ENCODE measurements at regions of chr21 and their contacts with region 1.

Region 1: GRCh38 chr21:45439161-45439872 is 34.4 kb downstream of the COL18A1 start:
- DNase-seq: peak; percentile 93
- H3K4me3 ChIP-seq: peak overlapping the region; percentile 11 to 45 (median 36)
- H3K27ac ChIP-seq: peak overlapping the region; percentile 66 to 80 (median 77)
- H3K4me1 ChIP-seq: peaks cover 0 to 24% (median 14%) of the 10 kb centered on the region in 4 donors
- H3K27me3 ChIP-seq: no peaks in the 10 kb centered on the region
- CTCF ChIP-seq: peak; percentile 96 to 98 (median 98)
- EP300 ChIP-seq: peak in 1 of 4 donors; percentile 52
- POLR2A ChIP-seq: no peak

Region 2: GRCh38 chr21:44949779-44950198 is 489.5 kb before region 1 on chr21:
- intact Hi-C with region 1: loop called (anchors 10 kb)
- DNase-seq: peak; percentile 94
- H3K4me3 ChIP-seq: no peak overlapping the region
- H3K27ac ChIP-seq: peak overlapping the region; percentile 16 to 63 (median 35)
- H3K4me1 ChIP-seq: peaks cover 0 to 35% (median 27%) of the 10 kb centered on the region in 4 donors
- H3K27me3 ChIP-seq: no peaks in the 10 kb centered on the region
- CTCF ChIP-seq: peak; percentile 94 to 98 (median 96)
- EP300 ChIP-seq: no peak
- POLR2A ChIP-seq: no peak

Region 3: DNA sequence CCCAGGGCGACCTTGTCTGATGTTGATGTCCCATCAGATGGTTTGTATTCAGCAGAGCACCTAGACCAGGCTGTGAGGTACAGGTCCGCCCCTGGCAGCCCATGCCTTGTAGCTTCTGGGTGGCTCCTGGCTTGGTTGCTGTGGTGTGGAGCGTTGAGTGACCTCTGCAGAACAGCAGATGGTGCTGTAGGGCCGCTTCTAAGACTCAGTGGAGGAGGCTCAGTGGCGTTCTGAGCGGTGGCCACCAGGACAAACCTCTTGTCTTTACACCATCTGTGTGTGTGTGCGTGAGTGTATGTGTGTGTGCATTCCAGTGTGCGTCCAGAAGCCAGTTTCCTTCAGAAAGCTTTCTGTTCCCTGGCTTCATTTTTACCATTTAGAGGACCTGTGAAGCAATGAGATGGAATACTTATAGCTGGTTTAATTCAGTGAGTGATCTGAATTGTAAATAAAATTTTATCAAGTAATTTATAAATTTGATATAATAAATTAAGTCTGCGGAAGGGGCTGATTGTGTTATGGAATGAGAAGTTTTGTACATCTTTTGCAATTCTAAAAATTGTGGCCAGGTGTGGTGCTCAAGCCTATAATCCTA is 298.9 kb before region 1 on chr21:
- intact Hi-C with region 1: loop called (anchors 5 kb)
- DNase-seq: peak; percentile 87
- H3K4me3 ChIP-seq: no peak overlapping the region
- H3K27ac ChIP-seq: peak overlapping the region in 2 of 4 donors; percentile 24 to 47
- H3K4me1 ChIP-seq: peaks cover 4 to 48% (median 26%) of the 10 kb centered on the region in 4 donors
- H3K27me3 ChIP-seq: no peaks in the 10 kb centered on the region
- CTCF ChIP-seq: peak; percentile 68 to 83 (median 76)
- EP300 ChIP-seq: no peak
- POLR2A ChIP-seq: no peak

Region 4: GRCh38 chr21:45353200-45353599 is 86.1 kb before region 1 on chr21:
- intact Hi-C with region 1: loop called (anchors 5 kb)
- DNase-seq: no peak
- H3K4me3 ChIP-seq: no peak overlapping the region
- H3K27ac ChIP-seq: no peak overlapping the region
- H3K4me1 ChIP-seq: peaks cover 0 to 31% (median 25%) of the 10 kb centered on the region in 4 donors
- H3K27me3 ChIP-seq: no peaks in the 10 kb centered on the region
- CTCF ChIP-seq: no peak
- EP300 ChIP-seq: no peak
- POLR2A ChIP-seq: no peak

Region 5: DNA sequence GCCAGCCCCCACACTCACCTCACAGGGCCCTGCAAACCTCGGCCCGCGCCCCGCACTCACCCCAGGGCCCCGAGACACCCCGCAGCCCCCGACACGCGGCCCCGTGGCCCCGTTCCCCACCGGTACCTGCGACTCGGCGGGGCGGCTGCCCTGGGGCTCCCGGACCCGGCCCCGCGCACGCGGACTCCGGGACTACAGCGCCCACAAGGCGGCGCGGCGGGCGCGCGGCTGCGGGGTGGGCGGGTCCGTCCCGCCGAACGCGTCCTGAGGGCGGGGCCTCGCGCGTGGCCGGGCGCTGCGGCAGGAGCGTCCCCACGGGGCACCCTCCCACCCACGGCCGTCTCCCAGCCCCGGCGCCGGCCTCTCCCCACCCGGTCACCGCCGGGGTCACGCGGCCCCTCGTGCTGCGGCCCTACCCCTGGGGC is 102.9 kb after region 1 on chr21 and contains the start of gene SLC19A1:
- intact Hi-C with region 1: no loop called
- DNase-seq: peak; percentile 77
- H3K4me3 ChIP-seq: peak within 1 kb of the TSS; percentile 54 to 89 (median 74)
- H3K27ac ChIP-seq: peak within 1 kb of the TSS; percentile 59 to 80 (median 74)
- H3K4me1 ChIP-seq: peaks cover 0 to 25% (median 19%) of the 10 kb centered on the region in 4 donors
- H3K27me3 ChIP-seq: no peaks in the 10 kb centered on the region
- CTCF ChIP-seq: peak in 1 of 4 experiments; percentile 55
- EP300 ChIP-seq: no peak
- POLR2A ChIP-seq: no peak
- total RNA-seq, gene SLC19A1: 2.1 to 6.4 (median 2.5) TPM

Measured in sigmoid colon (tissue), 7 donors.